ENCODE measurements at regions of chr10 and their contacts with region 1.

Region 1: GRCh38 chr10:87817609-87818504 is at the start of gene ATAD1:
- DNase-seq: peak; percentile 92
- total RNA-seq, gene ATAD1: 22.6 and 37.7 TPM in 2 replicates

Region 2: DNA sequence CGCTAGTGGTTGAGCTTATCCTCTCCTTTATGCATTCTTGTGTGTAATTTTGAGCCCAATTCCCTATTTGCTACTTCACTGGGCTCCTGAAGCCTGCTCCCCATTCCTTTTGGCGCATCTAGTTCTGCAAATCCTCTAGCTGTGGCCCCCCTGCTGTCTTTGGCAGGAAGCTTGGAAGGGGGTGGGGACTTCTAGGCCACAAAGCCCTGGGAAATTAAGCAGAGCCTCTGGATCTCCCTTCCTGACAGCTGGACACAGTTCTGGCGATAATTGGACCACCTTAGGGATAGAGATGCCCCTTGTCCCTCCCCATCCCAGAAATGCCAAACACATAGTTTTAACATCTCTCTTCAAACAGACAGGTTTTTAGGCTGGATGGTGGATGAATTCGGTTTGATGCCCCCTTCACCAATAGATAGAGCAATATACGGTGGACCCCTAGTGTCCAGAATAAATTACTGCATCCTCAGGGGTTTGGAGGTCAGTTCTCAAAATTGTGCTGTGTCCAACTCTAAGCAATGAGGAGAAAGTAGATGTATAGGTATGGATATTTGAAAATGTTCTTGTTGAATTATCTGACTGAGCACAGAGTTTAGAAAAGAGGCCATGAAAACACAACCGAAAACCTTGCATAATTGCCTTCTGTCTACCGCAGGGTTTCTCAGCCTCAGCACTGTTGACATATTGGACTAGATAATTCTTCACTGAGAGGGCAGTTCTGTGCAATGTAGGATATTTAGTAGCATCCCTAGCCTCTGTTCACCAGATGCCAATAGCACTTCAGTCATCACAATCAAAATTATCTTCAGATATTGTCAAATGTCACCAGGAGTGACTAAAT is 82.7 kb before region 1 on chr10:
- in situ Hi-C with region 1: loop called (anchors 10 kb)
- DNase-seq: peak; percentile 49

Region 3: GRCh38 chr10:87850742-87851205 is 32.9 kb after region 1 on chr10:
- in situ Hi-C with region 1: no loop called
- DNase-seq: peak; percentile 63

Measured in Caki2 (cell line).